T-cell (primary cell): ENCODE measurements at regions of chr17 and their contacts with region 1.

Region 1: GRCh38 chr17:700504-701094 is 14.0 kb downstream of the VPS53 start:
- DNase-seq: peak in 5 of 35 experiments; percentile 8 to 74 (median 16)
- ATAC-seq: peak; percentile 49 to 67 (median 56)
- H3K4me3 ChIP-seq: no peak overlapping the region
- H3K4me3 Mint-ChIP-seq: no peak overlapping the region
- H3K27ac ChIP-seq: no peak overlapping the region
- H3K27ac Mint-ChIP-seq: peak overlapping the region in 1 of 2 donors; percentile 11
- H3K4me1 ChIP-seq: no peaks in the 10 kb centered on the region
- H3K4me1 Mint-ChIP-seq: peaks cover 0 to 11% (median 2%) of the 10 kb centered on the region in 3 donors
- H3K27me3 ChIP-seq: no peaks in the 10 kb centered on the region
- H3K27me3 Mint-ChIP-seq: no peaks in the 10 kb centered on the region

Region 2: DNA sequence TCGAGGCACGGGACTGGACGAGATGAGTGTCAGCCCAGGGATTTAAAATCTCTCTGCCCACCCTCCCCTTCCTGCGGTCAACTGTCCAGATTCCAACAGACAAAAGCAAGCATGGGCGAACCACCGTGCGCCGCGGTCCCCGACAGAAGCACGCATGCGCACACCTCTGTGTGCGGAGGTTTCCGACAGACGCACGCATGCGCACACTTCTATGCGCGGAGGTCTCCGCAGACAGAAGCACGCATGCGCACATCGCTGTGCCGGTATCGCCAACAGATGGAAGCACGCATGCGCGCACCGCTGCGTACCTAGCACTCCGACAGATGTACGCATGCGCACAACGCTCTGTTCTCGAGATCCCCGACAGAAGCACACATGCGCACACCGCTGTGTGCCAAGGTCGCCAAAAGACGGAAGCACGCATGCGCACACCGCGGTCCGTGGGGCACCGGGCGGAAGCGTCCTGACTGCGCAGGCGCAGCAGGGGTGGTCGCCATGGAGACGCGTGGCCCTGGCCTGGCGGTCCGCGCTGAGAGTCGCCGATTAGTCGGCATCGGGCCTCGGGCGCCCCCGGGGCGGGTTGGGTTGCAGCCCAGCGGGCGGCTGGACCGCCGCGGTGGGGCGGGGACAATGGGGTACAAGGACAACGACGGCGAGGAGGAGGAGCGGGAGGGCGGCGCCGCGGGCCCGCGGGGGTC is 290.6 kb before region 1 on chr17:
- CTCF ChIA-PET with region 1: interaction called, 20 to 94 read pairs
- POLR2A ChIA-PET with region 1: no interaction called
- DNase-seq: peak; percentile 97 to 100 (median 99)
- ATAC-seq: peak; percentile 53 to 70 (median 62)
- H3K4me3 ChIP-seq: peak overlapping the region; percentile 83
- H3K4me3 Mint-ChIP-seq: peak overlapping the region; percentile 86 to 96 (median 91)
- H3K27ac ChIP-seq: peak overlapping the region; percentile 92
- H3K27ac Mint-ChIP-seq: peak overlapping the region; percentile 97 to 98
- H3K4me1 ChIP-seq: peaks cover 39 to 58% of the 10 kb centered on the region in 2 experiments
- H3K4me1 Mint-ChIP-seq: peaks cover 65 to 75% (median 68%) of the 10 kb centered on the region in 3 donors
- H3K27me3 ChIP-seq: no peaks in the 10 kb centered on the region
- H3K27me3 Mint-ChIP-seq: peaks cover 0 to 2% of the 10 kb centered on the region in 2 donors

Region 3: DNA sequence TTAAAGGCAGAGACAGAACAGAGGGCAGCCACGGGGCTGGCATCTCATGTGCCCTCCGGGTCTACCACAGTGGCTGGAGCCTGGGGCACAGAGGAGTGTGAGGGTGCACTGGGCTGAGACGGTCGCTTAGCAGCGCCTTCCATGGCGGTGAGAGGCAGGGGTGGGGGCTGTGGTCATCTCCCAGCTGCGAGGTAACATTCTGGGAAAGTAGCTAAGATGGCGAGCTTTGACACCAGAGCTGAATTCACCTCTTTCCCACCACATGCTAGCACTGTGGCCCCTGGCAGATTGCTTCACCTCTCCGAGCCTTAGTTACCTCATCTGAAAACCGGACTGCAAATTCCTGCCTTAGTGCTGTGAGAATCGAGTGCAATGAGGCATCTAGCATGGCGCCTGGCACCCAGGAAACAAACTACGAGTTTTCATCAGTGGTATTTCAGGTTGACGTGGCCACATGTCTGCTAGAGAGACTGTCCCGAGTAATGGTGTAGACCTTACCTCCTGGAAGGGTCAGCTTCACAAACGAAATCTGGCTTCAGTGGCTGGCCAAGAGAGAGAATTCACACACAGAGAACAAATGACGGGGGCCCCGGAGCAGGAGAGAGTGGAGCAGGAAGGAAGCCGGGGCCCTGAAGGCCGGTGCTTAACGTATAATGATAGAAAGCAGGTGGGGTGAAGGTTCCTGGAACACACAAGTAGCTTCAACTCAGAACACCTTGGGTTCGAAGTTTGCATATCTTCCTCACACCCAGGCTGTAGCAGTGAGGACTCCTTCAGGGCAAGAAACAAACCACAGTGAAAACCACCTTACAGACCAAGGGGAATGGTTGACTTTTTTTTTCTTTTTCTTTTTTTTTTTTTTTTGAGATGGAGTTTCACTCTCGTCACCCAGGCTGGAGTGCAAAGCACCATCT is 284.0 kb before region 1 on chr17:
- CTCF ChIA-PET with region 1: interaction called, 20 to 94 read pairs
- POLR2A ChIA-PET with region 1: no interaction called
- DNase-seq: peak in 25 of 35 experiments; percentile 8 to 77 (median 33)
- ATAC-seq: peak; percentile 44 to 59 (median 48)
- H3K4me3 ChIP-seq: peak overlapping the region; percentile 53 to 60
- H3K4me3 Mint-ChIP-seq: peak overlapping the region; percentile 91 to 94 (median 93)
- H3K27ac ChIP-seq: peak overlapping the region; percentile 86
- H3K27ac Mint-ChIP-seq: peak overlapping the region; percentile 98 to 100
- H3K4me1 ChIP-seq: peaks cover 59 to 97% of the 10 kb centered on the region in 2 experiments
- H3K4me1 Mint-ChIP-seq: peaks cover 86 to 87% (median 87%) of the 10 kb centered on the region in 3 donors
- H3K27me3 ChIP-seq: no peaks in the 10 kb centered on the region
- H3K27me3 Mint-ChIP-seq: peaks cover 0 to 2% of the 10 kb centered on the region in 2 donors